Activated naive CD4-positive, alpha-beta T cell treated with anti-CD3 and anti-CD28 coated beads, Interleukin-2, amount 10 ng/mL, durations not matched to agents 7 days and 5 days (primary cell): ENCODE measurements at regions of chr10 and their contacts with region 1.

Region 1: DNA sequence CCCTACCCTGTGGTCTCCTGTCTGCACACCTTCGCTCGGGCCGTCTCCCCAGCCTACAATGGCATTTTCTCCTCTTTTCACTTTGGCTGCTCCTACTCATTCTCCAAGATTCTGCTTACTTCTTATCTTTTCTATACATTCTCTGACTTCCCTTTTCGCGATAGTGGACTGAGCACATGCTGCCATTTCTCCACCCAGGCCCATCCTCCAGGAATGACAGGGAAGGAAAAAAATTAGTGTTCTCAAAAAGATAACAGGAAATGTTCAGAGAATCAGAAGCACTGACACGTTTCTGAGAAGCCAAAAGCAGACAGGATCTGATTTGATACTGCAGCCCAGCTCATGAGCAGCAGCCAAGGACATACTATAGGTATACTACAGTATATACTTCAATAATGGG is 6.4 kb upstream of the ANXA11 start:
- DNase-seq: no peak
- H3K4me3 Mint-ChIP-seq: no peak overlapping the region
- H3K27ac Mint-ChIP-seq: no peak overlapping the region
- H3K4me1 Mint-ChIP-seq: peaks cover 20% of the 10 kb centered on the region
- H3K27me3 Mint-ChIP-seq: peaks cover 5% of the 10 kb centered on the region

Region 2: GRCh38 chr10:79995979-79996634 is 215.7 kb before region 1 on chr10:
- CTCF ChIA-PET with region 1: no interaction called
- DNase-seq: no peak
- H3K4me3 Mint-ChIP-seq: no peak overlapping the region
- H3K27ac Mint-ChIP-seq: no peak overlapping the region
- H3K4me1 Mint-ChIP-seq: no peaks in the 10 kb centered on the region
- H3K27me3 Mint-ChIP-seq: peaks cover 29% of the 10 kb centered on the region

Region 3: GRCh38 chr10:80070057-80070456 is 141.7 kb before region 1 on chr10:
- CTCF ChIA-PET with region 1: no interaction called
- DNase-seq: no peak
- H3K4me3 Mint-ChIP-seq: no peak overlapping the region
- H3K27ac Mint-ChIP-seq: no peak overlapping the region
- H3K4me1 Mint-ChIP-seq: no peaks in the 10 kb centered on the region
- H3K27me3 Mint-ChIP-seq: peaks cover 10% of the 10 kb centered on the region

Region 4: GRCh38 chr10:80144067-80144695 is 67.6 kb before region 1 on chr10:
- CTCF ChIA-PET with region 1: interaction called, 94 read pairs
- DNase-seq: peak; percentile 48
- H3K4me3 Mint-ChIP-seq: peak overlapping the region; percentile 68
- H3K27ac Mint-ChIP-seq: peak overlapping the region; percentile 66
- H3K4me1 Mint-ChIP-seq: peaks cover 21% of the 10 kb centered on the region
- H3K27me3 Mint-ChIP-seq: peaks cover 31% of the 10 kb centered on the region

Region 5: GRCh38 chr10:80196270-80196949 is 15.4 kb before region 1 on chr10:
- CTCF ChIA-PET with region 1: no interaction called
- DNase-seq: peak; percentile 69
- H3K4me3 Mint-ChIP-seq: no peak overlapping the region
- H3K27ac Mint-ChIP-seq: peak overlapping the region; percentile 77
- H3K4me1 Mint-ChIP-seq: peaks cover 74% of the 10 kb centered on the region
- H3K27me3 Mint-ChIP-seq: no peaks in the 10 kb centered on the region